CD14-positive monocyte (primary cell): ENCODE measurements at regions of chr1 and their contacts with region 1.

Region 1: GRCh38 chr1:46401964-46402626 is 8.0 kb downstream of the FAAH start:
- DNase-seq: peak; percentile 78 to 91 (median 87)
- H3K4me3 ChIP-seq: peak overlapping the region in 1 of 3 experiments; percentile 25
- H3K4me3 Mint-ChIP-seq: peak overlapping the region in 1 of 2 donors; percentile 51
- H3K27ac ChIP-seq: peak overlapping the region; percentile 72 to 76
- H3K27ac Mint-ChIP-seq: peak overlapping the region; percentile 63 to 88 (median 77)
- H3K4me1 ChIP-seq: peaks cover 65 to 74% of the 10 kb centered on the region in 2 donors
- H3K4me1 Mint-ChIP-seq: peaks cover 68% of the 10 kb centered on the region
- H3K27me3 ChIP-seq: no peaks in the 10 kb centered on the region
- H3K27me3 Mint-ChIP-seq: peaks cover 1 to 2% (median 2%) of the 10 kb centered on the region in 3 donors
- CTCF ChIP-seq: no peak

Region 2: GRCh38 chr1:46333300-46334029 is 68.6 kb before region 1 on chr1:
- intact Hi-C with region 1: no loop called
- DNase-seq: peak; percentile 53 to 84 (median 76)
- H3K4me3 ChIP-seq: no peak overlapping the region
- H3K4me3 Mint-ChIP-seq: no peak overlapping the region
- H3K27ac ChIP-seq: no peak overlapping the region
- H3K27ac Mint-ChIP-seq: peak overlapping the region in 2 of 7 donors; percentile 21 to 78
- H3K4me1 ChIP-seq: peaks cover 2 to 8% of the 10 kb centered on the region in 2 donors
- H3K4me1 Mint-ChIP-seq: peaks cover 4% of the 10 kb centered on the region
- H3K27me3 ChIP-seq: no peaks in the 10 kb centered on the region
- H3K27me3 Mint-ChIP-seq: peaks cover 0 to 3% (median 0%) of the 10 kb centered on the region in 3 donors
- CTCF ChIP-seq: peak; percentile 70

Region 3: GRCh38 chr1:46364612-46365011 is 37.5 kb before region 1 on chr1:
- intact Hi-C with region 1: loop called (anchors 5 kb)
- DNase-seq: no peak
- H3K4me3 ChIP-seq: no peak overlapping the region
- H3K4me3 Mint-ChIP-seq: no peak overlapping the region
- H3K27ac ChIP-seq: no peak overlapping the region
- H3K27ac Mint-ChIP-seq: no peak overlapping the region
- H3K4me1 ChIP-seq: peaks cover 7 to 9% of the 10 kb centered on the region in 2 donors
- H3K4me1 Mint-ChIP-seq: peaks cover 10% of the 10 kb centered on the region
- H3K27me3 ChIP-seq: no peaks in the 10 kb centered on the region
- H3K27me3 Mint-ChIP-seq: no peaks in the 10 kb centered on the region
- CTCF ChIP-seq: no peak

Region 4: GRCh38 chr1:46370214-46370633 is 31.9 kb before region 1 on chr1:
- intact Hi-C with region 1: loop called in 1 of 2 experiments (anchors 5 kb)
- DNase-seq: peak; percentile 50 to 74 (median 63)
- H3K4me3 ChIP-seq: peak overlapping the region in 1 of 3 experiments; percentile 13
- H3K4me3 Mint-ChIP-seq: peak overlapping the region; percentile 33 to 59
- H3K27ac ChIP-seq: peak overlapping the region; percentile 32 to 67
- H3K27ac Mint-ChIP-seq: peak overlapping the region; percentile 79 to 95 (median 92)
- H3K4me1 ChIP-seq: peaks cover 61% of the 10 kb centered on the region in 2 donors
- H3K4me1 Mint-ChIP-seq: peaks cover 56% of the 10 kb centered on the region
- H3K27me3 ChIP-seq: no peaks in the 10 kb centered on the region
- H3K27me3 Mint-ChIP-seq: no peaks in the 10 kb centered on the region
- CTCF ChIP-seq: no peak

Region 5: DNA sequence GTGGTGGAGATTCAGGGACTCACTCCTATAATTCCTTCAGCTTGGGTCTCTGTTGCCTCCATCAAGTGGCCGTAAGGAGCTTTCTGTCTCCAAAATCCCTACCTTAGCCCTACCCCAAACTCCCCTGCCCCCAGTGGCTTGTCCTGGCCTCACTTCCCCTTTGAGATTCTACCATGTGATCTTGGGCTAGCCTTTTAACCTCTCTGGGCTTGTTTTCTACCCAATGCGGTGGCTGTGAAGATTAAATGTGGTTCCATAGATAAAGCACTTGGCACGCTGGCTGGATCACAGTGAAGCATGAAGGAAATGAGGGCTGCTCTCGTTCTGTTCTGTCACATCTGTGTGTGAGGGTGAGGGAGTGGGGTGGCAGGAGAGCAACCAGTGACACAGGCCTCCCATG is 35.6 kb after region 1 on chr1:
- intact Hi-C with region 1: no loop called
- DNase-seq: no peak
- H3K4me3 ChIP-seq: no peak overlapping the region
- H3K4me3 Mint-ChIP-seq: no peak overlapping the region
- H3K27ac ChIP-seq: no peak overlapping the region
- H3K27ac Mint-ChIP-seq: peak overlapping the region in 1 of 7 donors; percentile 50
- H3K4me1 ChIP-seq: peaks cover 11% of the 10 kb centered on the region in 2 donors
- H3K4me1 Mint-ChIP-seq: peaks cover 19% of the 10 kb centered on the region
- H3K27me3 ChIP-seq: no peaks in the 10 kb centered on the region
- H3K27me3 Mint-ChIP-seq: peaks cover 4 to 24% (median 7%) of the 10 kb centered on the region in 3 donors
- CTCF ChIP-seq: no peak

Region 6: DNA sequence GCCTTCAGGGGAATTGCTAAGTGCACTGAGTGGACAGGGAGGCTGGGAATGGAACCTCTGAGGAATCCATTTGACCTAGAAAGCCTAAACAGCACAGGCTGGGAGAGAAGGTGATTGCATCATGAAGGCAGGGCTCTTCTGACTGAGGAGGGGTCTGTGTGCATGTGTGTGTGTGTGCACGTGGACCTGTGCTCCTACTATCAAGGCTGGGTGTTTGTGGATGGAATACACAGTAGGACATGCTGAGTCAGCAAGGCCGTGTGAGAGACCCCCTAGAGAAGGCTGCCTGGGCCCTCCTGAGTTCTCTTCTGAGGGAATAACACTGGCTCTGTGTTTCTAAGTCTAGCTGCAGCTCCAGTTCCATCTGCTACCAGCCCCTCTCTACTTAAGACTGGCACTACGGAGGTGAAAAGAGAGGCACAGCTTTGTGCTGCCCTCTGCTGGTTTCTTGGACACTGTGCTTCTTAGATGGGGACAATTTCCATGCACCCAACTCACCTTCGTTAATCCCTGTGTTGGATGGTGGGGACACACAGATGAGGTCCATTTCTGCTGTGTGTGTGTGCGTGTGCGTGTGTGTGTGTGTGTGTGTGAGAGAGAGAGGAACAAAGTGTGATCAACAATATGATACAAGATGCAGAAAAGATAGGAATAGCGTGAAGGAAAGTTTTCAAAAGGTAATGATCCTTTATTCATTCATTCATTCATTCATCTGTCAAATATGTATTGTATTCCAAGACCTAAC is 323.1 kb after region 1 on chr1:
- intact Hi-C with region 1: loop called in 1 of 2 experiments (anchors 10 kb)
- DNase-seq: peak; percentile 60 to 76 (median 68)
- H3K4me3 ChIP-seq: no peak overlapping the region
- H3K4me3 Mint-ChIP-seq: no peak overlapping the region
- H3K27ac ChIP-seq: no peak overlapping the region
- H3K27ac Mint-ChIP-seq: no peak overlapping the region
- H3K4me1 ChIP-seq: no peaks in the 10 kb centered on the region
- H3K4me1 Mint-ChIP-seq: peaks cover 4% of the 10 kb centered on the region
- H3K27me3 ChIP-seq: peaks cover 0 to 3% of the 10 kb centered on the region in 2 donors
- H3K27me3 Mint-ChIP-seq: peaks cover 15 to 33% (median 15%) of the 10 kb centered on the region in 3 donors
- CTCF ChIP-seq: peak; percentile 73